AG04449 (cell line): ENCODE measurements at regions of chr11 and their contacts with region 1.

Region 1: DNA sequence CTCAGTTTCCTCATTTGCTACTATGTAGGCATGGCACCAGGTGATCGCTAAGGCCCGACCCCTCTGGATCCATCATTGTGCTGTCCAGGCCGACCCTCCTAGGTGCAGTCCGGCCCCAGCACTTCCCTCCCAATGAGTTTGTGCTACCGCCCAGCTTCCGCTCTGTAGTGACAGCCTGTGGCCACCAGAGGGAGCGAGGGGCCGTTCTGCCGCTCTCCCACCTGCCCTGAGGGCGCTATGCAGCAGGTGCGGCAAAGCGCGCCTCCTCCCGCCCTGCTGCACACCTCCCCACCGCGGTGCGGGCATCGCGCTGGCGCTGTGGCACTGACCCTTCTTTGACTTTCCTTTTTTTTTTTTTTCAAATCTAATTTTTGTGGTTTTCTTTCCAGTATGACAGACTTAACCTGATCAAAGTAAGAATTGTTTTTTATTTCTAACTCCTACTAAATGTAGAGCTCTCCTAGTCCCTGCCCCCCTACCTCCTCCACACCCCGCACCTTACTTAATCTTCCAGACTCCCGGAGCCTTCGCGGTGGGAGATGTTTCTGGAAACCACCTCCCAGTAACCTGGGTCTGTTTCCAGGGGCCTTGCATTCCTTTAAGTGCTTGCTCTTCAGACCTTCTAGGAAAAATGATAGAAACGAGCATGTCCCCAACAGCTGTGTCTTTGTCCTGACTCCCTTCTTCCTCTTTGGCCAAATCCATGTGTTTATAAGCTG is 73.7 kb downstream of the SCN3B start:
- DNase-seq: no peak
- H3K4me3 ChIP-seq: no peak overlapping the region
- CTCF ChIP-seq: peak; percentile 98

Region 2: GRCh38 chr11:123454060-123454651 is 126.6 kb before region 1 on chr11:
- CTCF ChIA-PET with region 1: no interaction called
- POLR2A ChIA-PET with region 1: no interaction called
- DNase-seq: no peak
- H3K4me3 ChIP-seq: no peak overlapping the region
- CTCF ChIP-seq: no peak

Region 3: GRCh38 chr11:123505546-123506299 is 75.0 kb before region 1 on chr11:
- CTCF ChIA-PET with region 1: interaction called, 94 read pairs
- POLR2A ChIA-PET with region 1: no interaction called
- DNase-seq: no peak
- H3K4me3 ChIP-seq: no peak overlapping the region
- CTCF ChIP-seq: no peak

Region 4: DNA sequence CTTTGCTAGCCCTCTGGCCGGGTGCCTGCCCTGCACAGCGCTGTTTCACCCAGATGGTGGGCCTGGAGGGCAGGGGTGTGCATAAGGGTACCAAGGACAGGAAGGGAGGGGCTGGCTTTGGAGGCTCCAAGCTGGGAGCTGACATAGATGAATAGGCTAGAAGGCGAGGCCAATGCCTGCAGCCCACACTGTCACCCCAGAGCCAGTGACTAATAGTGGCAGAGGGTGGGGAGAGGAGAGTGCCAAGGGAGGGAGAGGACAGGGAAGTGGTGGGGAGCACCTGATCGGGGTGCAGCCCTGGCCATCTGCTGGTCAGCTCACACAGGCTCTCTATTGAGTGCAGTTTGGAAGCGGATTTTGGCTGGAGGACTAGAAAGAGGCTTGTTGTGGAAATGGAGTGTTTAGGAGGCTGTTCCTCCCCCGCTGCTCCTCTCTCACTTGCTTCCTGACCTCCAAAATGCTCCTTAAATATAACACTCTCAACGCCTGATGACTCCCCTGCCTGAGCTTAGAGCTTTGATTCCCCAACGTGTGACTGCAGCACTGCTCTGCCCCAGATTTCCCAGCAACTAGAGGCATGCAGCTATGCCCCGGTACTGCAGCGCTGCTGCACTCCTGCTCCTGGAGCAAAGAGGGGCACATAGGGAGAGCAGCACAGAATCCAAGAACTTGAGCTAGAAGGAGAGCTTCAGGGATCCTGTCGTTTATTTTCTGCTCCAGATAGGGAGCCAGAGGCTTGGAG is 61.5 kb before region 1 on chr11:
- CTCF ChIA-PET with region 1: interaction called, 66 read pairs
- POLR2A ChIA-PET with region 1: no interaction called
- DNase-seq: no peak
- H3K4me3 ChIP-seq: no peak overlapping the region
- CTCF ChIP-seq: no peak

Region 5: GRCh38 chr11:123536690-123537437 is 43.9 kb before region 1 on chr11:
- CTCF ChIA-PET with region 1: interaction called, 19 read pairs
- POLR2A ChIA-PET with region 1: no interaction called
- DNase-seq: no peak
- H3K4me3 ChIP-seq: no peak overlapping the region
- CTCF ChIP-seq: no peak

Region 6: DNA sequence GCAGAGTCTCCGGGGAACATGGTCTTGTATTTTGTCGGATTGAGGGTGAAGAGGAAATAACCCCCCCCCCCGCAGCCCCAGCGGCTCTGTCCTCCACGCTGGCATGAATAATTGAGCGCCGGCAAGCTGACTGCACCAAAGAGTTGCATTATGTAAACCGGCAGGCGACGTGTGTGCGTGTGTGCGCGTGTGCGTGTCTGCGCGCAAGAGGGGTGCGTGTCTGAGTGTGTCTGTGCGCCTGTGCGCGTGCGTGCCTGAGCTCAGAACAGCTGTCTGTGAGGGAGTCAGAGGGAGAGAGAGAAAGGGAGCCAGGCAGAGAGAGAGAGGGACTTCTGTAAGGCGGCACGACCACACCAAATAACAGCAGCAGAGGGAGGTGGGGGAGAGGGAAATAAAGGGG is 20.7 kb before region 1 on chr11:
- CTCF ChIA-PET with region 1: interaction called, 371 read pairs
- POLR2A ChIA-PET with region 1: no interaction called
- DNase-seq: peak; percentile 59
- H3K4me3 ChIP-seq: peak overlapping the region; percentile 48
- CTCF ChIP-seq: no peak

Region 7: GRCh38 chr11:123707606-123708205 is 127.0 kb after region 1 on chr11:
- CTCF ChIA-PET with region 1: interaction called, 271 read pairs
- POLR2A ChIA-PET with region 1: interaction called, 6 read pairs
- DNase-seq: peak; percentile 26
- H3K4me3 ChIP-seq: no peak overlapping the region
- CTCF ChIP-seq: peak; percentile 71

Region 8: GRCh38 chr11:123760894-123761293 is 180.2 kb after region 1 on chr11:
- CTCF ChIA-PET with region 1: no interaction called
- POLR2A ChIA-PET with region 1: no interaction called
- DNase-seq: no peak
- H3K4me3 ChIP-seq: no peak overlapping the region
- CTCF ChIP-seq: no peak